ENCODE measurements at regions of chr20 and their contacts with region 1.

Region 1: GRCh38 chr20:36808317-36809257 is 35.0 kb upstream of the DSN1 start:
- DNase-seq: peak; percentile 78
- ATAC-seq: peak; percentile 71
- H3K4me3 ChIP-seq: no peak overlapping the region
- H3K4me3 Mint-ChIP-seq: no peak overlapping the region
- H3K27ac ChIP-seq: no peak overlapping the region
- H3K27ac Mint-ChIP-seq: peak overlapping the region; percentile 50
- H3K4me1 ChIP-seq: peaks cover 0 to 9% of the 10 kb centered on the region in 2 donors
- H3K4me1 Mint-ChIP-seq: peaks cover 3% of the 10 kb centered on the region
- H3K27me3 ChIP-seq: no peaks in the 10 kb centered on the region
- H3K27me3 Mint-ChIP-seq: no peaks in the 10 kb centered on the region
- CTCF ChIP-seq: peak; percentile 83

Region 2: DNA sequence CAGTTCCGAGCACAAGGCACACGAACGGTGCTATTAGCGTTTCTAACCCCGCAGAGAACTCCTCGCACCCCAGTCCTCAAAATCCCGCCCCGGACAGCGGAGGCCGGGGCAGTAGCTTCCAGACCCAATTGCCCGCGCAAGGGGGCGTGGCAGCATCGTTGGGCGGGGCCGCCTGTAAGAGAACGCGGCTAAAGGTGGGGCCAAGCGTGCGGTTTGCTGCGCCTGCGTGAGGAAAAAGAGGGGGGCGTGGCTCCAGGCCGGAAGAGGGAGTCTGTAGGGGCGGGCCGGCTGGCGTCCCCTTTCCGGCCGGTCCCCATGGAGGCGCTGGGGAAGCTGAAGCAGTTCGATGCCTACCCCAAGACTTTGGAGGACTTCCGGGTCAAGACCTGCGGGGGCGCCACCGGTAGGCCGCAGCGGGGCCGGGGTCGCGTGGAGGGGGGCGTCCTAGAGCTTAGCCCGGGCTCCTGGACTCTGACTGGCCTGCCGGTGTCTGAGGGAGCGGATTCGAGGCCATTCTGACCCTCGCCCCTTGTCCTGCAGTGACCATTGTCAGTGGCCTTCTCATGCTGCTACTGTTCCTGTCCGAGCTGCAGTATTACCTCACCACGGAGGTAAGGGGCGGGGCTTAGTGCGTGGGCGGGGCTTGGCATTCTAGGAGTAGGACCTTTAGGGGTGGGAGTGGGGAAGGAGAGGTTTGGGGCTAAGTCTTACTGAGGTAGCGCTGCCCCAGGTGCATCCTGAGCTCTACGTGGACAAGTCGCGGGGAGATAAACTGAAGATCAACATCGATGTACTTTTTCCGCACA is 1266.6 kb before region 1 on chr20 and contains the start of gene ERGIC3:
- CTCF ChIA-PET with region 1: no interaction called
- POLR2A ChIA-PET with region 1: no interaction called
- intact Hi-C with region 1: no loop called
- DNase-seq: peak; percentile 98
- ATAC-seq: peak; percentile 93
- H3K4me3 ChIP-seq: peak within 1 kb of the TSS; percentile 55 to 94 (median 87)
- H3K4me3 Mint-ChIP-seq: peak within 1 kb of the TSS; percentile 94
- H3K27ac ChIP-seq: peak within 1 kb of the TSS; percentile 63 to 82
- H3K27ac Mint-ChIP-seq: peak within 1 kb of the TSS; percentile 94
- H3K4me1 ChIP-seq: peaks cover 9 to 18% of the 10 kb centered on the region in 2 donors
- H3K4me1 Mint-ChIP-seq: peaks cover 26% of the 10 kb centered on the region
- H3K27me3 ChIP-seq: no peaks in the 10 kb centered on the region
- H3K27me3 Mint-ChIP-seq: no peaks in the 10 kb centered on the region
- CTCF ChIP-seq: no peak
- total RNA-seq, gene ERGIC3: 167 and 191 TPM in 2 replicates

Region 3: DNA sequence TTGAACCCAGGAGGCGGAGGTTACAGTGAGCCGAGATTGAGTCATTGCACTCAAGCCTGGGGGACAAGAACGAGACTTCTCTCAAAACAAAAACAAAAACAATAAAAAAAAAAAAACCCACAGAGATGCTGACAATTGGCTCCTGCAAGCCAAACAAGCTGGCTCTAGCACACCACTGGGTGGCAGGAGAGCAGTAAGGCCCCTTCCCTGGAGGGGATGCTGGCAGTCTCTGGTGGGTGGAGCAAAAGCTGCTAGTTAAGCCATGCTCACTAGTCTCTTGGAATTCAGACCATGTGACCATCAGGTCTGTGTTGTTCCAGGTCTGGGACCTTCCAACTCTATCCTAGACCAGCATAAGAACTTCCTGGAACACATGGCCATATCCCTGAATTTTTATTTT is 16.2 kb before region 1 on chr20:
- CTCF ChIA-PET with region 1: interaction called, 45 read pairs
- POLR2A ChIA-PET with region 1: interaction called, 5 read pairs
- intact Hi-C with region 1: no loop called
- DNase-seq: peak; percentile 56
- ATAC-seq: peak; percentile 65
- H3K4me3 ChIP-seq: no peak overlapping the region
- H3K4me3 Mint-ChIP-seq: no peak overlapping the region
- H3K27ac ChIP-seq: no peak overlapping the region
- H3K27ac Mint-ChIP-seq: no peak overlapping the region
- H3K4me1 ChIP-seq: no peaks in the 10 kb centered on the region
- H3K4me1 Mint-ChIP-seq: peaks cover 6% of the 10 kb centered on the region
- H3K27me3 ChIP-seq: no peaks in the 10 kb centered on the region
- H3K27me3 Mint-ChIP-seq: no peaks in the 10 kb centered on the region
- CTCF ChIP-seq: peak; percentile 36

Measured in B cell (primary cell).